AG04450 (cell line): ENCODE measurements at regions of chr14 and their contacts with region 1.

Region 1: DNA sequence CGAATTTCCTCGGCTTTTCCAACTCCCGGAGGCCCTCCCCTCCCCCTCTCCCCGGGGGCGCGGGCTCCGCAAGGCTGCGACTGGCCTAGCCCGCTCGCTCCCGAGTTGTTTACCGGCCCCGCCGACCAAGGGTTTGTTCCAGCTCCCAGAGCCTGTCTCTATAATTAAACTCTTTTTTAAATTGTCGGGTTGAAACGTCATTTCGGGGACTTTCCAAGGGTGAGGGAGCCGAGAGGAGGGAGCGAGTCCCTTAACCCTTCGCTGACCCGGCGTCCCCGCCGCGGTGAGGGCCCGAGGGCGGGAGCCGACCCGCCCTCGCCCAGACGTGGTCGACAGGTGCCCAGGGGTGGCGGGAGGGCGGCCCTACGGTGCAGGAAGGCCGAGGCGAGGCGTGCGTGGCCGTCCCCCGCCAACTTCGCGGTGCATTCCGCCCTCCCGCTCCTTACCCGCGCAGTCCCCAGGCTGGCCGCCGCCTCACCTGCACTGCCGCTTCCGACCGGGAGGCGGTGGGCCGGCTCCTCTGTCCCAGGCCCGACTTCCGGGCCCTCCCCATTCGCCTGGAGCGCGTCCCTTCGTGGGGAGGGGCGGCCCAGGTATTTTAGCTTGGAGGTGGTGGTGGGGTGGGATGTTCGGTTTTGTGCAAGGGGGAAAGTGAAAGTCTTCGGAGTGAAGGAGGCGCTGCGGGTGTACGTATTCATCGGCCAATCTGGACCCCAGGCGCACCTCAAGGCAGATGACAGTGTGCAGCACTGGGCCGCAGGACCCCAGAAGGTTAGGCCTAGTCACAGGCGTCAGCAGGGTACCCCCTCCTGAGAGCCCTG is 2.9 kb upstream of the ZFP36L1 start:
- DNase-seq: no peak
- H3K4me3 ChIP-seq: peak overlapping the region; percentile 100
- H3K27ac ChIP-seq: peak overlapping the region; percentile 100
- H3K27me3 ChIP-seq: no peaks in the 10 kb centered on the region
- CTCF ChIP-seq: peak; percentile 67

Region 2: DNA sequence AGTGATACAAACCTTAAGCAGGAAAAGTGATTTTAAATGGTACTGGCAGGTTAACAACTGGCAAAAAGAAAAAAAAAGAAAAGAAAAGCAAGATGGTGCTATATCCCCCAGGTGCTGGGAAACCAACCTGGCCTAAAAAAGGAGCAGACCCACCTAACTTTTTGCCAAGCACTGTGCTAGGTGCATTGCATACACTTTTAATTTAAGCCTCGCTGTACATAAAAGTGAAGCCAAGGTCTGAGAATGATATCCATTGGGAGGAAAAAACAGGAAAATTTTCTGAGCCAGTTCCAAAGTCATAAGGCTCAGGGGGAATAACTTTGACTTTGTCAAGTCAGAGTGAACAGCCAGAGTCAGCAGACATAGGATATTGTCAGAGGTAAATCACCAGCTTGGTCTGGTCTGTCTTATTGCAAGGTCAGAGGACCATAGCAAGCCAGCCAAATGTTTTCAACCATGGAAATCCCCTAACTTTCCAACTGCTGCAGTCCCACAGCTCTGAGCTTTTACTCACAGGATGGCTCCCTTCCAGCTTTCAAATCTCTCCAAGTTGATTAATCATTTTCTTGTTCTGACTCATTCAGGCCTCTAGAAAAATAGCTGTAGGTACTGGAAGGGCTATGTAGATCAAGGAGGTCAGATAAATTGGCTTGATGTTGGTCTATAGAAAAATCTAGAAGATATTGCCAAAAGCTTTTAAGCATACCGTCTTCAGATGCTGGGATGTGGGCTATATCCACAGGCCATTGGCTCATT is 563.3 kb before region 1 on chr14:
- CTCF ChIA-PET with region 1: no interaction called
- POLR2A ChIA-PET with region 1: interaction called, 19 read pairs
- DNase-seq: peak; percentile 98
- H3K4me3 ChIP-seq: no peak overlapping the region
- H3K27ac ChIP-seq: peak overlapping the region; percentile 87
- H3K27me3 ChIP-seq: no peaks in the 10 kb centered on the region
- CTCF ChIP-seq: no peak

Region 3: GRCh38 chr14:68520637-68521556 is 274.9 kb before region 1 on chr14:
- CTCF ChIA-PET with region 1: no interaction called
- POLR2A ChIA-PET with region 1: interaction called, 11 read pairs
- DNase-seq: no peak
- H3K4me3 ChIP-seq: no peak overlapping the region
- H3K27ac ChIP-seq: no peak overlapping the region
- H3K27me3 ChIP-seq: no peaks in the 10 kb centered on the region
- CTCF ChIP-seq: no peak

Region 4: DNA sequence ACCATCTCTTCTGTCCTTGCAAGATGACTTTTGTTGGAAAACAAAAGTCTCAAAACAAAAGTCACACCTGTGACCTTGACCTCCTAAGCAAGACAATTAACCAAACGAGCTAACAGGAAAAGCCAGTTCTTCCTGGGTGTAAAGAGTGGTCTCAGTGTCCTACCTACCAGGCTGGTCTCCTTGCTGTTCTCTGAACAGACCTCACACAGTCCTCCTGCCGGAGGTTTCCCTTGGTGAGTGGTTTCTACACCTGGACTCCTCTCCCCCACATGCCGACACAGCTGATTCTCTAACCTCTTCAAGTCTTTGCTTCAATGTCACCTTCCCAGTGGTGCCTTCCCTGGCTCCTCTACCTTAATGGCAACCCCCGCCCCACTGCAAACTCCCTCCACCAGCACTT is 241.6 kb before region 1 on chr14:
- CTCF ChIA-PET with region 1: no interaction called
- POLR2A ChIA-PET with region 1: interaction called, 11 read pairs
- DNase-seq: no peak
- H3K4me3 ChIP-seq: no peak overlapping the region
- H3K27ac ChIP-seq: no peak overlapping the region
- H3K27me3 ChIP-seq: no peaks in the 10 kb centered on the region
- CTCF ChIP-seq: no peak

Region 5: GRCh38 chr14:68658943-68659931 is 136.6 kb before region 1 on chr14:
- CTCF ChIA-PET with region 1: no interaction called
- POLR2A ChIA-PET with region 1: interaction called, 10 read pairs
- DNase-seq: no peak
- H3K4me3 ChIP-seq: no peak overlapping the region
- H3K27ac ChIP-seq: peak overlapping the region; percentile 21
- H3K27me3 ChIP-seq: no peaks in the 10 kb centered on the region
- CTCF ChIP-seq: no peak

Region 6: DNA sequence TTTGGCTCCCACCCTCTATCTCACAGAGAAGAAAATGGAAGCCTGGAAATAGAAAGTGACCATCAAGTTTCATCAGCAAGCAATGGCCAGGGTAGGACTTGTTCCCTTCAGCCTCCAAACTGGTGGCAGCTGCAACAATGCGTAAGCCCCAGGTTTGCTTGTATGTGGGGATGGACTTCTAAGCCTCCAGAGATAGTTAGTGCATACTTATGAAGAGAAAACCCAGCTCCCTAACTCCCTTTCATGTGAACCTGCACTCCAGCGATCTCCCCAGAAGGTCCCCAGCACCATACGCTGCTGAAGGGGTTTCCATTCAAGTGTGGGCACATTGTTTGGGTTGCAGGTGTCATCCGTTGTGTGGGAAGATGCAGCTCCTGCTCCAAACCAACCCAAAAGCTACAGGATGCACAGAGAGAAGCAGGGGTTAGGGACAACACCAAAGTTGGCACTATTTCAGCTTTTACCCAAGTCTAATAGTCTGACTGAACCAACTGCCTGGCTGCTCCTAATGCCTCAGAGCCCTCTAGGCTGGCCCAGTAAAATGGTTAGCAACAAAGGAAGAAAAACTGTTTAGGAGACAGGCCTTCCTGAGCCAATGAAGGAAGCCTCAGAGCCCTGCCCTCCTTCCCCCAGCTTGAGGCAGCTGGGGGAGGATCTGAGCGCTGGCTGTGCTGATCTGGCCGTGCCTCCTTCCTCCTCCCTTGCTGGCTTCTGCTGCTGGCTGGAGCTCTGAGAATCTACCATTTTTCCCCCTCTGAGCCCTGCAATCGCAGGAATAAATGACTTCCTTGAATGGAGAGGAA is 15.2 kb before region 1 on chr14:
- CTCF ChIA-PET with region 1: no interaction called
- POLR2A ChIA-PET with region 1: interaction called, 18 read pairs
- DNase-seq: no peak
- H3K4me3 ChIP-seq: no peak overlapping the region
- H3K27ac ChIP-seq: peak overlapping the region; percentile 70
- H3K27me3 ChIP-seq: no peaks in the 10 kb centered on the region
- CTCF ChIP-seq: no peak

Region 7: GRCh38 chr14:68816262-68816942 is 20.6 kb after region 1 on chr14:
- CTCF ChIA-PET with region 1: interaction called, 16 read pairs
- POLR2A ChIA-PET with region 1: interaction called, 105 read pairs
- DNase-seq: peak; percentile 79
- H3K4me3 ChIP-seq: peak overlapping the region; percentile 46
- H3K27ac ChIP-seq: peak overlapping the region; percentile 95
- H3K27me3 ChIP-seq: no peaks in the 10 kb centered on the region
- CTCF ChIP-seq: peak; percentile 94